Activated CD4-positive, alpha-beta T cell treated with anti-CD3 and anti-CD28 coated beads, Interleukin-2, amount 10 ng/mL, durations not matched to agents 24 days and 14 days (primary cell): ENCODE measurements at regions of chr5 and their contacts with region 1.

Region 1: GRCh38 chr5:73381590-73382400 is 66.8 kb downstream of the FOXD1 start:
- DNase-seq: peak; percentile 58
- H3K4me3 Mint-ChIP-seq: no peak overlapping the region
- H3K27ac Mint-ChIP-seq: no peak overlapping the region
- H3K4me1 Mint-ChIP-seq: peaks cover 7% of the 10 kb centered on the region
- H3K27me3 Mint-ChIP-seq: peaks cover 69% of the 10 kb centered on the region

Region 2: DNA sequence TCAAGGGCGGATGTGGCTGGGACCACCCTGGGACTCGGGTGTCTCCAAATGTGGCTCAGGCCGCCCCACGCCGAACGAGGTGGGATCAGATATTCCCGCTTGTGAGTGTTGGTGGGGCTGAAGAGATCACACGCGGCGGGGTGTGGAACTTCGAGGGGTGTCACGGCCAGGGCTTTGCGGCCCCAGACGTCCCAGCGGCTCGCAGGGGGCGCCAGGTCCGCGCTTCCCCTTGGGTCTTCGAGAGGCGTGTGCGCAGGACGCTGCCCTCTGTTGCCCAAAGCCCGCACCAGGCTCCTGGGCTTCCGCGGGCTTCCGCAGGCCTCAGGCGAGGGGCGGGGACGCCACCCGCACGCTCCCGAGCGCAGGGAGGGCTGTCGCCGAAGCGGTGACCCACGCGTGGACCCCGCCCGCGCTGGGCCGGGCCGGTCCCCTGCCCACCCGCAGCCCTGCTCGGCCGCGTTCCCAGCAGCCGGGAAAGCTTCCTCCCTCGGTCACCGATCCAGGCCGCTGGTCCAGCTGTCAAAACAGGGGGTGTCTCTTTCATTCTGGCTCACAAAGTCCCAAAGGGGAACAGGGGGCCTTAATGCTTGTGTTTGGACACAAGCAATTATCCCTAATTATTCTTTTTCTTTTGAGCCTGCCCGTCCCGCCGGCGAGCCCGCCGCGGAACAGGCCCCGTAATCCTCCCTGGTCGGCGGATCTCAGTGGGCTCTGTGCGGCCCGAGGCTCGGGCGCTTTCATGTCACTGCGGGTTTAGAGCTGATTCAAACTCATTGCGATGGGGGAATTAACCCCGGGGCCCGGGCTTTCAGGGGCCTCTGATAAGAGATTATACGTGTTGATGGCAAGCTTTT is 148.2 kb before region 1 on chr5:
- intact Hi-C with region 1: loop called (anchors 5 kb)
- DNase-seq: no peak
- H3K4me3 Mint-ChIP-seq: no peak overlapping the region
- H3K27ac Mint-ChIP-seq: no peak overlapping the region
- H3K4me1 Mint-ChIP-seq: no peaks in the 10 kb centered on the region
- H3K27me3 Mint-ChIP-seq: peaks cover 70% of the 10 kb centered on the region

Region 3: GRCh38 chr5:73303148-73304079 is 78.4 kb before region 1 on chr5:
- intact Hi-C with region 1: loop called (anchors 2 kb)
- DNase-seq: no peak
- H3K4me3 Mint-ChIP-seq: no peak overlapping the region
- H3K27ac Mint-ChIP-seq: no peak overlapping the region
- H3K4me1 Mint-ChIP-seq: no peaks in the 10 kb centered on the region
- H3K27me3 Mint-ChIP-seq: peaks cover 81% of the 10 kb centered on the region

Region 4: DNA sequence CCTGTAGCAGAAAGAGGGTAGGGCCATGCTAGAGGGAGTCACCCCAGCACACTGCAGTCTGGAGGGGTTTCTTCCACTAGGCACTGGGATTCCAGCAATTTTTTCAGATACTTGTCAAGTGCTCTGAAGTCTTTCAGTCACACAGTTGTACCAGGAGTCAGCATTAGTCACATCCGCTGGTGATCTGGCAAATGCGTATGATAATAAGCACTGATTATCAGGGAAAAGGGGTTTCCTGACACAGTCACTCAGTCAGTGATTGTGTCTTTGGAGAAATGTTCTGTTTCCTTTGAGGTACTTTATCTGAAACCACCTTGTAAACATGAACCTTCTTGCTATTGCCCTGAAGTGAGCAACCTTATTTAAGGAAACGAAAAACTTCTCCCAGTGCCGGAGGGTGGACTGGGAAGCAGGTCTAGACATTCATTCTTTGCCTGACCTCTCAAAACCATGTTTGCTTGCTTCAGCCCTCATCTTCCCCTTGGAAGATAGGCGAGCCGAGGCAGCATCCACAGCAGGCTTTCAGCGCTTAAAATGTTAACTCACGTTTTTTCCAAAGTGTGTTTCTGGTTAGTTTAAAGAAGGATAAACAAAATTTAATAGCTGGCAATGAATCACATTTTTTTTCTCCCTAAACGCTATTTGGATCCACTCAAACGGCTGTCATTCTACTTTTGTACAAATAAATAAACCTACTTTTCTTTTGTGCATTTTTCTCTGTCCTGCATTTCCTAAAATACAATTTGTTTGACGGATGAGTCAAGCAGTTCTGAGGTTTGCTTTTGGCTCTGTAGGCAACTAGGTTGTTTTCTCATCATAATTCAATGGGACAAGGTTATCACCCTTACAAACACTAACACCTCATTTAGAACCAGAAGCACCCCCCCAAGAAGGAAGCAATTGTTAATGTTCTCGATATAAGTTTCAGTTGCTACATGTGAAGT is 10.9 kb before region 1 on chr5:
- intact Hi-C with region 1: no loop called
- DNase-seq: no peak
- H3K4me3 Mint-ChIP-seq: no peak overlapping the region
- H3K27ac Mint-ChIP-seq: no peak overlapping the region
- H3K4me1 Mint-ChIP-seq: no peaks in the 10 kb centered on the region
- H3K27me3 Mint-ChIP-seq: peaks cover 43% of the 10 kb centered on the region

Region 5: GRCh38 chr5:73419465-73420390 is 37.9 kb after region 1 on chr5:
- intact Hi-C with region 1: loop called (anchors 5 kb)
- DNase-seq: no peak
- H3K4me3 Mint-ChIP-seq: no peak overlapping the region
- H3K27ac Mint-ChIP-seq: no peak overlapping the region
- H3K4me1 Mint-ChIP-seq: peaks cover 2% of the 10 kb centered on the region
- H3K27me3 Mint-ChIP-seq: peaks cover 86% of the 10 kb centered on the region

Region 6: DNA sequence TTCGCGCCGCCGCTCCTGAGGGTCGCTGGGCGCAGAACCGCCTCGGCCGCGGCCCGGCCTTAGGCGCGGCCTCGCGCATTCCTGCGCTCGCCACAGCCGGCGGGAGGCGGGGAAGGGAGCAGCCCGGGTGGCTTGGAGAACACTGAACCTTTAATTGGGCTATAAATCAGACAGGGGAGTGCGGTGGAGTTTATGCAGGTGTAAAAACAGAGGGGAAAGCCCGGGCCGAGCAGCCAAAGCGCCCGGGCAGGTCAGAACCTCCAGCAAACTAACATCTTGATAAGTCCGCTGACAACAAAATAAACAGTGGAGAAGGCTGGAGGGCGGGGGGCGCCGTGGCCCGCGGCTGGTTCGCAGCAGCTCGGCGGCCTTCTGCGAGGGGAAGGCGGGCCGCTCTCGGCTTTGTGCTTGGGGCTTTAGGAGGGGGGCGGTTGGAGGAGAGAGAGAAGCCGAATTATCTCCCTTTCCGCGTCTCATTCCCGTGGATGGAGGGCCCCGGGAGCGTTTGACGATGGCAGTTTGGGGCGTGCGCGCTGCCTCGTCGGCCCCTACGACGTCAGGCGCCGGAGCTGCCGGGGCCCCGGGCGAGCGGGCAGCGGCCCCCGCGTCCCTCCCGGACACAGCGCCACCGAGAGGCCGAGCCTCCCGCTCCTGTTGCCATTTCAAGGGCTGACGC is 55.4 kb after region 1 on chr5:
- intact Hi-C with region 1: loop called (anchors 5 kb)
- DNase-seq: no peak
- H3K4me3 Mint-ChIP-seq: no peak overlapping the region
- H3K27ac Mint-ChIP-seq: no peak overlapping the region
- H3K4me1 Mint-ChIP-seq: peaks cover 6% of the 10 kb centered on the region
- H3K27me3 Mint-ChIP-seq: peaks cover 82% of the 10 kb centered on the region